Ascending aorta (tissue), 2 donors: ENCODE measurements at regions of chr13 and their contacts with region 1.

Region 1: GRCh38 chr13:30395192-30396084 is 26.9 kb upstream of the UBE2L5 start:
- DNase-seq: peak; percentile 85 to 95
- H3K4me3 ChIP-seq: peak overlapping the region; percentile 65 to 86
- H3K27ac ChIP-seq: peak overlapping the region; percentile 58 to 89
- H3K4me1 ChIP-seq: no peaks in the 10 kb centered on the region
- H3K27me3 ChIP-seq: no peaks in the 10 kb centered on the region
- CTCF ChIP-seq: no peak

Region 2: DNA sequence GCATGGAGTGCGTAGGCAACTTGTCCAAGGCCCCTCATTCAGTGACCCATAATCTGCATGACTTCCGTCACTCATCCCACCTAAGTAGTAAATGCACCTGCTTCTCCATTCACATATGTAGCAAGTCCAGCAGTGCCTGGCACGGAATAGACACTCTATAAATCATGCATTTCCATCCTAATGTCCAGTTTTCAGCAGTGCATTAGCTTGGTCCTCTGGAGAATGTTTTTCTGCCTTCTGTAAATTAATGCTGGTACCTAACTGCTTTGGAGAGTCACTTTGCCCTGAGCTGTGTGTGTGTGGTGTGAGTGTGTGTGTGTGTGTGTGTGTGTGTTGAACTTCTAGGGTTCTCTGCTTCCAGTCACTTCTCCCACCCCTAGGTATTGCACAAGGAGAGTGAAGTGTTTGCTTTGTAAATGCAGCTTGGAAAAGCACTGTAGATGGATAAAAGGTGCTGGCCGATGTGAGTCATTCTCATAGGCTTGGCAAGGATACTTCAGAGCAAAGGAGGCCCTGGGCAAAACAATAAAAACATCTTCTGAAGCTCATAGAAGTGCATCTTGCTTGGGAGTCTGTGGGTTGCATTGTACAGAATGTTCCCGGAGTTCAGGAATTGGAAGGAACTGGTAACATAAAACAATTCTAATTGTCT is 269.9 kb before region 1 on chr13:
- intact Hi-C with region 1: no loop called
- DNase-seq: no peak
- H3K4me3 ChIP-seq: no peak overlapping the region
- H3K27ac ChIP-seq: no peak overlapping the region
- H3K4me1 ChIP-seq: no peaks in the 10 kb centered on the region
- H3K27me3 ChIP-seq: no peaks in the 10 kb centered on the region
- CTCF ChIP-seq: no peak

Region 3: DNA sequence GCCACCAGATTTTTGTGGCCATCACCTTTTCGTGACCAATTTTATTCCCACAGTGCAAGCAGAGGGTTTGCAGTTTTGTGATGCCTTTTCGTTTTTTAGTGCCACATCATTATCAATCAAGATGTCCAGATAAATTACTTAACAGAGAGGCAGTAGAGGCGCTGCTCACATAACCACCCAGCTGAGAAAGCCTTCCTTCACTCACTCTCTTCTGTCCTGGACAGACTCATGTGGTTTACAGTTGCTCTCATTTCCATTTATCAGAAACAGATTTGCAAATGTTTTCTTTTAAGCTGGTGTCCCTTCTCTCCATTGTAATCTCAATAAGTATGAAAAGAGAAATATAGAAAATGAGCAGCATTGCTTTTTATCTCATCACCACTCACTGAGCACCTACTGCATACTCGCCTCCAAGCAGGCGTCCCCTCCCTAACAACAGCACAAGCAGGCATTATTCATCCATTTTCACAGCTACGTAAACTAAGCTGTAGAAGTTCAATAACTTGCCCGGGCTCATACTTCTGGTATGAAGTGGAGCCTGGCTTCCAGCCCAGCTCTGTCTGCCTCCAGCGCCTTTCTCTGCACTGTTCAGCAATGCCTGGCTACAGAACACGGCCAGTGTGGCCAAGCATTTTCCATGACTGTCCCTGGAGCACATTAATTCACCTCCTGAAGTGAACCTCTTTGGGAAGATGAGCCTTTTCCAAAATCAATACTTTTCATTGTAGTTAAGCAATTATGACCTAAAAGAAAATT is 53.4 kb before region 1 on chr13:
- intact Hi-C with region 1: loop called (anchors 2 kb)
- DNase-seq: peak; percentile 45 to 94
- H3K4me3 ChIP-seq: peak overlapping the region in 1 of 2 donors; percentile 15
- H3K27ac ChIP-seq: peak overlapping the region; percentile 77 to 83
- H3K4me1 ChIP-seq: peaks cover 4 to 20% of the 10 kb centered on the region in 2 donors
- H3K27me3 ChIP-seq: no peaks in the 10 kb centered on the region
- CTCF ChIP-seq: no peak